Motor neuron (in vitro differentiated cells): ENCODE measurements at regions of chr17 and their contacts with region 1.

Region 1: GRCh38 chr17:3636154-3636907 is at the starts of genes CTNS and SHPK:
- ATAC-seq: peak; percentile 89 to 98 (median 96)
- H3K4me3 ChIP-seq: peak within 1 kb of the TSS; percentile 83 to 97 (median 92)
- H3K27ac ChIP-seq: peak within 1 kb of the TSS; percentile 98 to 99
- H3K4me1 ChIP-seq: peaks cover 4 to 9% of the 10 kb centered on the region in 2 donors
- total RNA-seq, gene CTNS: 3.0 to 16.6 (median 10.9) TPM
- total RNA-seq, gene SHPK: 6.1 to 14.4 (median 7.0) TPM

Region 2: DNA sequence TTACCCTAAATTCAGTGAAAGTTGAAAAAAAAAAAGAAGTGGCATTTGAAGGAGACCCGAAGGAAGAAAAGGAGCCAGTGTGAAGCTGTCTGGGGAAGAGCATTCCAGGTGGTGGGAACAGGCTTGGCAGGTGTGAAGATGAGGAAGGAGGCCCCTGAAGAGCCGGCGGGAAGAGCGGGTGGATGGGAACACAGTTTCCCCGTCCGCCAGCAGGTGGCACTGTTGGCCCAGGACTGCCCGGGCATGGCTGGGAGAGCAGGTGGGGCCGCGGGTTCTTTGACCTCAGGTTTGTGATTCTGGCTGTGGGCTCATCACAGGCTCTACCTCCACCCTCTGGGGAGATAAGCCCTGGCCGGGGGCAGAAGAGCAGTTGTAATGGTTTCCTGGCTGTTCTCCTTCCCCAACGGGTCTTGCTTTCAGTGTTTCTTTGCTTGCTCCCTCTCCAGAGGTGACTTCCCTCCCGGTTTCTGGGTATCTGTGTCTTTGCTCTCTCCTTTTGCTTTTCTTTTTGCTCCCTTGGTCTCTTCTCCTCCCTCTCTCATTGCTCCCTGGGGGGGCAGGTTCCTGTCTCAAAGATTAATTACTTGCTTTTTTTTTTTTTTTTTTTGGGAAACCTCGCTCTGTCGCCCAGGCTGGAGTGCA is 807.8 kb before region 1 on chr17:
- in situ Hi-C with region 1: loop called in 1 of 9 experiments (anchors 25 kb)
- ATAC-seq: peak; percentile 79 to 91 (median 82)
- H3K4me3 ChIP-seq: no peak overlapping the region
- H3K27ac ChIP-seq: no peak overlapping the region
- H3K4me1 ChIP-seq: peaks cover 0 to 2% of the 10 kb centered on the region in 2 donors

Region 3: GRCh38 chr17:3048767-3049471 is 587.4 kb before region 1 on chr17:
- in situ Hi-C with region 1: loop called in 3 of 9 experiments (anchors 25 kb)
- ATAC-seq: peak; percentile 97 to 99 (median 98)
- H3K4me3 ChIP-seq: peak overlapping the region; percentile 41 to 85 (median 54)
- H3K27ac ChIP-seq: peak overlapping the region; percentile 63 to 73
- H3K4me1 ChIP-seq: peaks cover 2 to 4% of the 10 kb centered on the region in 2 donors